Common myeloid progenitor, CD34-positive (primary cell): ENCODE measurements at regions of chr6 and their contacts with region 1.

Region 1: DNA sequence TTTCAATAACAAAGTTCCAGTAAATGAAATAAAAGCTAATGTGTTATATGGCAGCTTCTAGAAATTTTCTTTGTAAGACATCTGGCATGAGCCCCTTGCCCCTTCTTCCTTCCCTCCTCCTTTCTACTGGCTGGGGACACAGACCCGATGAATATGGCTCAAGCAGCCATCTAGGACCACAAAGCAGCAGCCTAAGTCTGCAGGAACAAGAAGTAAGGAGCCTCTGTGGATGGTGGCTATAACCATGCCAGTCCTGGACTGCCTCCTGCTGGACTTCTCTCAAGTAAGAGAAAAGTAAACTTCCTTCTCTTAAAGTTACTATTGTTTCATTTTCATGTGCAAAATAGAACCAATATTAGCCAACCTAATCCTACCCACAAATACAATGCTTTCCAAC is 114.9 kb upstream of the DST start:
- DNase-seq: peak; percentile 71 to 83 (median 81)
- H3K4me3 ChIP-seq: no peak overlapping the region
- H3K27ac ChIP-seq: no peak overlapping the region
- H3K4me1 ChIP-seq: peaks cover 0 to 21% (median 1%) of the 10 kb centered on the region in 4 experiments
- H3K27me3 ChIP-seq: no peaks in the 10 kb centered on the region

Region 2: DNA sequence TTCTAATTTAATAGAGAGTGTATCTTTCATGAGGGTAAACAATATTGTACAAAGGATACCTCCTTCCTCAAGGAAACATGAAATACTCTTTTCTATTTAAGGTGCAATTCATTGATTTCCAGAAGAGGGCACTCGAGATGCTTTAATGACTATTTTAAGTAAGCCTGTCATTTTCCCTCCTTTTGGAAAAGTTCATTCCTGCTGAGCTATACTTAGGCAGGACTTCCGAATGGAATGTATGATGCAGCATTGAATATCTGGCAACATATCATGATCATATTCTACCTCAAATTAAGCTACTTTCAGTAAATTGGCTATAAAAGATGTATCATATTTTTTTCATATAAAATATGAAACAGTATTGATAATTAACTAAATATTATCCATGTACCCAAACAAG is 119.9 kb before region 1 on chr6:
- CTCF ChIA-PET with region 1: interaction called, 23 read pairs
- POLR2A ChIA-PET with region 1: no interaction called
- DNase-seq: peak; percentile 57 to 72 (median 57)
- H3K4me3 ChIP-seq: no peak overlapping the region
- H3K27ac ChIP-seq: no peak overlapping the region
- H3K4me1 ChIP-seq: no peaks in the 10 kb centered on the region
- H3K27me3 ChIP-seq: no peaks in the 10 kb centered on the region

Region 3: DNA sequence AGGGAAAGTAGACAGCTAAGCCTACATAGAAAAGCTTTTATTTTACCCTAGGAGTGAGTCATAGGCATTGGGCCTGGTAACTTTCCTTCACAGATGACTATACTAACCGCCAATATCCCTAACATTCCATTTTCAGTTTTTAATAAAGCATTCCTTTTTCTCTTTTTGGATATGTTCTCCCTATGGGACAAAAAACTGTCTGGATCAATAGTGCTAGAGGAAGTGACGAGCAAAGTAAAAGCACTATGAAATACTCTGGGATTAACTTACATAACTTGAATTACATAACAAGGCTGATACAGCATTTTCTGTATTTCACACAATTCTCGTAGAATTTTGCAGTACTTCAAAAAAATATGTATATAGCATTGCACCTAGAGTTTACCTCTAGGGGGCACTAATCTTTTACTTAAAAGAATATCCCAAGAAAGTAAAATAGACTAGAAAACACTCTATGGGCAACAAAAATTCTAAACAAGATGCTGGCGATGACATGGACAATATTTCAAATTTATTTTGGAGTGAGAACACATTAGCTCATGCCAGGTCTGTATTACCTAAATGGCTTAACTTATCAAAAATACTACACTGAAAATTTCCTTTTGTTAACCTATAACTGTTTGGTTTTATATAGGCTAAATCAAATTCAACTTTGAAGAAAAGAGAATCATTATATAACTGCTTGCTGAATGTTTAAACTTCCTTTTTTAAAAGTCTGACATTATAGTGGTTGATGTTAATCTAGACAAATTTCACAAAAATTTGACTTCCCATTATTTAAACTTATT is 48.6 kb before region 1 on chr6:
- CTCF ChIA-PET with region 1: interaction called, 95 read pairs
- POLR2A ChIA-PET with region 1: no interaction called
- DNase-seq: peak; percentile 75 to 86 (median 83)
- H3K4me3 ChIP-seq: no peak overlapping the region
- H3K27ac ChIP-seq: no peak overlapping the region
- H3K4me1 ChIP-seq: no peaks in the 10 kb centered on the region
- H3K27me3 ChIP-seq: no peaks in the 10 kb centered on the region

Region 4: GRCh38 chr6:56716229-56716628 is 41.4 kb before region 1 on chr6:
- CTCF ChIA-PET with region 1: interaction called, 95 read pairs
- POLR2A ChIA-PET with region 1: no interaction called
- DNase-seq: no peak
- H3K4me3 ChIP-seq: no peak overlapping the region
- H3K27ac ChIP-seq: no peak overlapping the region
- H3K4me1 ChIP-seq: no peaks in the 10 kb centered on the region
- H3K27me3 ChIP-seq: no peaks in the 10 kb centered on the region

Region 5: DNA sequence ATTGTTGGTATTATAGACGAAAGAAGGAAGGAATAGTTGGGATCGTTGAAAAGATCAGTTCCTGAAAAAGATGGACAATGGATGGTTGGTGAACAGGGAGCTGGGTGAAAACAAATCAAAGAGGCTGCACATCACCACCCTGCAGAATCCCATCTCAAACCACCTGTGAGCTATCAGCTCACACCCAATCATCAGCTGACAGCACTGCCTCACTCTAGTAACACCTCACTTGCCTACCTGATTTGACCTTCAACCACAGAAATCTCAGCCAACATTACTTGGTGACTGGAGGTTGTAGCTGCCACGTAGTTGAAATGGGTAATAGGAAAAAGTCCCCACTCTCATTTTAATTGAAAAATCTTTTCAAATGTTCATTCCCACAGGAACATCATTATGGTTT is 13.1 kb before region 1 on chr6:
- CTCF ChIA-PET with region 1: interaction called, 11 read pairs
- POLR2A ChIA-PET with region 1: no interaction called
- DNase-seq: no peak
- H3K4me3 ChIP-seq: no peak overlapping the region
- H3K27ac ChIP-seq: no peak overlapping the region
- H3K4me1 ChIP-seq: peaks cover 0 to 3% (median 1%) of the 10 kb centered on the region in 4 experiments
- H3K27me3 ChIP-seq: no peaks in the 10 kb centered on the region

Region 6: GRCh38 chr6:56843573-56844349 is 86.2 kb after region 1 on chr6:
- CTCF ChIA-PET with region 1: interaction called, 11 read pairs
- POLR2A ChIA-PET with region 1: no interaction called
- DNase-seq: peak; percentile 89 to 96 (median 95)
- H3K4me3 ChIP-seq: peak overlapping the region; percentile 64 to 90 (median 78)
- H3K27ac ChIP-seq: no peak overlapping the region
- H3K4me1 ChIP-seq: peaks cover 0 to 24% (median 7%) of the 10 kb centered on the region in 4 experiments
- H3K27me3 ChIP-seq: no peaks in the 10 kb centered on the region

Region 7: GRCh38 chr6:56851541-56852259 is 94.1 kb after region 1 on chr6:
- CTCF ChIA-PET with region 1: interaction called, 12 read pairs
- POLR2A ChIA-PET with region 1: no interaction called
- DNase-seq: peak; percentile 77 to 88 (median 85)
- H3K4me3 ChIP-seq: peak overlapping the region; percentile 56 to 95 (median 76)
- H3K27ac ChIP-seq: no peak overlapping the region
- H3K4me1 ChIP-seq: peaks cover 6 to 22% (median 14%) of the 10 kb centered on the region in 4 experiments
- H3K27me3 ChIP-seq: no peaks in the 10 kb centered on the region